ENCODE measurements at regions of chr1 and their contacts with region 1.

Region 1: DNA sequence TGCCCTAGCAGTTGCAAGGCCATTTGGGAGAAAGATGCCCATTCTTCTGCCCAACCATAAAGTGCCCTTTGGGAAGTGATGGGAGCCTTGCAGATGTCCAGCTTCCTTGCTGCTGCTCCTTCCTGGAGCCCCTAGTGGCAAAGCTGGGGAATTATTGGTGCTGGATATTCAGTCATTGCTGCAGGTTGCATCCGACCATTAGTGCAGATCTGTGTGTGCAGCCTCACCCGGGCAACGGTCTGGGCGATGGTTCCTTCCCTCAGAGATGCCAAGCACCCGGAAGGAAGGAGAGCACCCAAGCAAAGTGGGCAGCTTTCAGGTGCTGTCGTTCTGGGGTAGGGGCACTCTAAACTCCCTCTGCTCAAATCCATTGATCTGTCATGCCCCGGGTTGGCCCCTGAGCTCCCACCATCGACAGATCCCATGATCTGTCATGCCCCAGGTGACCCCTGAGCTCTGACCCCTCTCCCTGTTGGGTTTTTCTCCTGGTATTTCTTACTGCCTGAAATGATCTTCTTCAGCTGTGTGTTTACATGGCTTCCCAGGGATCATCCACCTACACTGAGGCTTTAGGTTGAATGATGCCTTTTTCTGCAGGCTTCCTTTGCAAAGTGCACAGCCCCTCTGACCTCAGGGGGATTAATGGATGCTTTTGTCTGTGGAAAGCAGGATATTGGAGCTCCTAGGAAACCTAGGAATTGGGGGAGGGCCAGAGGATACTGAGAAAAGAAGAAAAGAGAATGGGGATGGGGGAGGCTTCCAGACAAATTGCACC is 467.5 kb downstream of the PTPRU start:
- DNase-seq: no peak
- H3K4me3 ChIP-seq: no peak overlapping the region
- H3K27ac ChIP-seq: no peak overlapping the region
- H3K27me3 ChIP-seq: peaks cover 4% of the 10 kb centered on the region
- CTCF ChIP-seq: peak; percentile 93

Region 2: DNA sequence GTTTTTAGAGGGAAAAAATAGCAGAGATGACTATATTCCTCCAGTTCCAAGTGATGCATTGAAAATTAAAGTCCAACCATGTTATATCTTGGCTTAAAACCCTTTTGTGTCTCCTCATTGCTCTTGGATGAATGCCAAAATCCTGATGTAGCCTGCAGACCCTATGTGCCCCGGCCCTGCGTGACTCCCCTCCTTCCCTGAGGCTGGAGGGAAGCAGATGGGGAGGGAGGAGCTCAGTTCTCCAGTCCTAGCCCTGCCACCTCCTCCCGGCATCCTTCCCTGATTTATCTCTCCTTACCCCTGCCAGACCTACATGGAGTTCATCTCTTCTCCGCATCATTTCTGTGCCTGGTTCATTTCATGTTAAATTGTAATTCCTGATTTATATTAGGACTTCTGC is 70.0 kb before region 1 on chr1:
- CTCF ChIA-PET with region 1: interaction called, 10 read pairs
- POLR2A ChIA-PET with region 1: interaction called, 3 read pairs
- DNase-seq: no peak
- H3K4me3 ChIP-seq: no peak overlapping the region
- H3K27ac ChIP-seq: no peak overlapping the region
- H3K27me3 ChIP-seq: no peaks in the 10 kb centered on the region
- CTCF ChIP-seq: no peak

Region 3: DNA sequence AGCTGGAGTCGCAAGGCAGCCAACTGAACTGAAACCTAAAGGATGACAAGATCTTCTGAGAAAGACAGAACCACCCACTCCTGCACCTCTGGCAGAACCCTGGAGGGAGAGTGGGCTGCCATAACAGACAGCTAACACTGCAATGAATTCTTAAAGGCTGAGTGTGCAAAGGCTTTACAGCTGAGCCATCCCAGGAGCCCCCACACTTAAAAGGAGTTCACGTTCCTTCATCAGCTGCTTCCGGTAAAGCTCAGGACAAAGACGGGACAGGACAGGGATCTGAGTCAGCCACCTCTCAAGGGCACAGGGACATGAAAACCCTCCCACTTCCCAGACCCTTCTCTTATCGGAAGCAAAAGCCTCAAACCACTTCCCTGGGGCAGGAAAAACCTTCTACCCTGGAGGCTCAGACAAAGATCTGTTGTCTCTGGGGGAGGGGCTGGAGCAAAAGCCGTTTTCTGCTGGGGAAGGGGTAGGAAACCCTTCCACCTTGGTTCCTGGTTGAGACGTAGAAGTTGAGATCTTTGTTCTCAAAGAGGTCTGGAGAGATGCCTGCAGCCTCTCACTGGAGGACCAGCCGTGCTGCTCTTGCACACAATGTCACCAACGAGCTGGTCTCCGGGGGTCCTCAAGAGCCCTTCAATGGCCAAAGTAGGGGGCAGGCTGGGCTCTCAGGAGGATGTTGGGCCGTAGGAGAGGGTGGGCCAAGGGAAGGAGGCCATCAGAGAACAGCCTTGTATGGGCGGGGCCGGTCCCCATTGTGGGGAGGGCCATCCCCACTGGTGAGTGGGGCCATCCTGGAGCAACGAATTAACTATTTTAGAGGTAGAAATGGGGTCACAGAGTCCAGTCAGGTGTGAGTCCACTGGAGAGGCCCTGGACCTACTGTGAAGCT is 15.1 kb before region 1 on chr1:
- CTCF ChIA-PET with region 1: interaction called, 70 read pairs
- POLR2A ChIA-PET with region 1: no interaction called
- DNase-seq: peak; percentile 73
- H3K4me3 ChIP-seq: peak overlapping the region; percentile 25; the same call in 1 of the 2 replicates
- H3K27ac ChIP-seq: peak overlapping the region; percentile 97
- H3K27me3 ChIP-seq: no peaks in the 10 kb centered on the region
- CTCF ChIP-seq: no peak

Region 4: DNA sequence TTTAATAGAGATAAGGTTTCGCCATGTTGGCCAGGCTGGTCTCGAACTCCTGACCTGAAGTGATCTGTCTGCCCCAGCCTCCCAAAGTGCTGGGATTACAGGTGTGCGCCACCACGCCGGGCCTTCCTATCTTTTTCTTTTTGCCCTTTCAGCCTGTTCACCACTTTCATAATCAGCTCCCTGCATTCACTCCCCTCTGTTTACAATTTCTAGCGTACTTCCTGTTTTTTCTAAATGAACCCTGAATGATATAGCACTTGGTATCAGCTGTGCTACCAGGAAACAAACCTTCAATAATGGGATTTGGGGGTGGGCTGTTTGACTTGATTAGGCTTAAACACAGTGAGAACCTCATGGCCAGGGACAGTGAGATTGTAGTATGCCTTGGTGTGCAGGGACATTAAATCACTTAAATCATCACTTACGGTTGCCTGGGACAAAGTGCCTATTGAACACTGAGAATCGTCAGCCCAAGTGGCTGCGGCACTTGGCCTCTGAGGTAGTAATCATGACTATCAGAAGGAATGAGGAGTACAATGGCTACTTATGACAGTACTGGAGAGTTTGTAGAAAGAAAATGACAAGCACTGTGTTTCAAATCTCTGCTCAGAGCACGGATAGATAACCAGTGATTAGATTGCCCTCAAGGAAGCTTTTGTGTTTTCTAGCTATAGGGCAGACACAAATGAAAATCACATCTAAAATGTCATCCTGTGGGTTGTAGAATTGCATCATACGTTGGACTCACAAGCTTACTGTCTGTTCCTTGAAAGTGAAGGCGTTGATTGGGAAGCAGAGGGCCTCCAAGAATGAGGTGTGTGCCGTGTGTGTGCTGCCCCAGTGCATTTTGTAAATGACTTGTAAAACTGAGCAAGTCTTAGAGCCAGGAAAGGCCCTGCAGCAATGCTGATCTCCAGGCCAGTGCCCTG is 357.8 kb after region 1 on chr1:
- CTCF ChIA-PET with region 1: no interaction called
- POLR2A ChIA-PET with region 1: no interaction called
- DNase-seq: no peak
- H3K4me3 ChIP-seq: no peak overlapping the region
- H3K27ac ChIP-seq: no peak overlapping the region
- H3K27me3 ChIP-seq: peaks cover 4% of the 10 kb centered on the region
- CTCF ChIP-seq: no peak

Measured in AG04450 (cell line).